ENCODE measurements at regions of chr3 and their contacts with region 1.

Region 1: GRCh38 chr3:16600780-16601539 is 4.3 kb downstream of the DAZL start:
- DNase-seq: peak; percentile 37
- H3K4me3 ChIP-seq: no peak overlapping the region
- H3K27ac ChIP-seq: no peak overlapping the region
- H3K4me1 ChIP-seq: no peaks in the 10 kb centered on the region
- H3K27me3 ChIP-seq: no peaks in the 10 kb centered on the region
- CTCF ChIP-seq: peak; percentile 73 to 76

Region 2: DNA sequence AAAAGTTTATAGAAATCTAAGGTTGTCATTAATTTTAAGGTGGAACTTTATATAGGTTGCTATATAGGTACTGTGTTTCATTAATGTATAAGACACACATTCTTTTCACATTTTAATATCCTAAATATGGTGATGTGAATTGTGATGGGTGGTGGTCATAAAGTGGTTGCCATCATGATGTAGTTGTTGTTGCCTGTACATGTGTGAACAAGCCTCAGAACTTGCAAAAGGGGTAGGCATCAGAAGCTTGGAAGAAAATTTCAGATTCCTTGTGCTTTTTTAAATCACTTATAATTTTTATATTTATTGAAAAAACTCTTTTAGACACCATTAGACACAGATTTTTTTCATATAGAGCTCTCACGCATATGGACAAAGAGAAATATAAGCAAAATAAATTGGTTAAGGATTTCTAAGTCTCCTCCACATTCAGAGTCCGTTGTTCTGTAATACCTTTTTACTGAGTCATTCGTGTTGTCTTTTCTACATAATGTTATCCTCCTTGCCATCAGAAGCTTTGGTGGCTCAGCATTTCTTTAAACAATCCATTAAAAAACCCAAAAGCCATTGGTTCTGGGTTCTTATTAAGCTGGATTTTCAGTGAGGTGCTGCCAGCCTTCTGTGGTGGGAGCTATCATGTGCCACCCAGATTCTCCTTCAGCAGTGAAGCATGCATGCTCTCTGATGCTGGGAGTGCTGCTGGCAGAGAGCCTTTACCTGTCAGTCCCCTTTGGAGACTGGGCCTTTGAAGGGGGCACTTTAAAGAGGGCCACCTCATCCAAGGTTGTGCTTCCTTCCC is 566.9 kb before region 1 on chr3:
- CTCF ChIA-PET with region 1: no interaction called
- dilution Hi-C with region 1: no loop called
- in situ Hi-C with region 1: no loop called
- intact Hi-C with region 1: no loop called
- DNase-seq: peak; percentile 29
- H3K4me3 ChIP-seq: no peak overlapping the region
- H3K27ac ChIP-seq: peak overlapping the region; percentile 10
- H3K4me1 ChIP-seq: peaks cover 15% of the 10 kb centered on the region
- H3K27me3 ChIP-seq: no peaks in the 10 kb centered on the region
- CTCF ChIP-seq: no peak

Region 3: GRCh38 chr3:16290007-16290826 is 310.7 kb before region 1 on chr3:
- CTCF ChIA-PET with region 1: no interaction called
- dilution Hi-C with region 1: no loop called
- in situ Hi-C with region 1: no loop called
- intact Hi-C with region 1: loop called (anchors 5 kb)
- DNase-seq: peak; percentile 28
- H3K4me3 ChIP-seq: no peak overlapping the region
- H3K27ac ChIP-seq: no peak overlapping the region
- H3K4me1 ChIP-seq: peaks cover 4% of the 10 kb centered on the region
- H3K27me3 ChIP-seq: no peaks in the 10 kb centered on the region
- CTCF ChIP-seq: peak; percentile 69 to 77

Region 4: DNA sequence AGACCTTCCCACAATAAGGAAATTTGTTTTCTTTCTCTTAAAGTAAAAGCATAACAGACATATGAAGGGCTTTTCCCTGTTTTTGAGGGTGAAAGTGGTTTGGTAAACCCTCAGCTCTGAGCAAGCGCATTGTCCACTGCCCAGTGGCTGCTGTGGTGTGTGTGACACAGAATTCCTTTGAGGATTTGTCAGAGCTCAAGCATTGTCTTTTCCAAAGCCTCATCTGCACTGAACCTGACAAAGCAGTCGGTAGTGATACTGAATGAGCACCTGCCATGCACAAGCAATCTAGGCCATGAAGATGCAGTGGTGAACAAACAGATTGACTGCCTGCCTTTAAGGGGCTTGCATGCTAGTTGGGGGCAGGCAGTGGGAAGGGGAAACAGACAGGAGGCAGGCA is 412.1 kb after region 1 on chr3:
- CTCF ChIA-PET with region 1: no interaction called
- dilution Hi-C with region 1: no loop called
- in situ Hi-C with region 1: no loop called
- intact Hi-C with region 1: no loop called
- DNase-seq: no peak
- H3K4me3 ChIP-seq: no peak overlapping the region
- H3K27ac ChIP-seq: no peak overlapping the region
- H3K4me1 ChIP-seq: no peaks in the 10 kb centered on the region
- H3K27me3 ChIP-seq: no peaks in the 10 kb centered on the region
- CTCF ChIP-seq: no peak

Region 5: GRCh38 chr3:17032407-17033034 is 431.6 kb after region 1 on chr3:
- CTCF ChIA-PET with region 1: no interaction called
- dilution Hi-C with region 1: no loop called
- in situ Hi-C with region 1: no loop called
- intact Hi-C with region 1: loop called (anchors 1 kb)
- DNase-seq: no peak
- H3K4me3 ChIP-seq: no peak overlapping the region
- H3K27ac ChIP-seq: no peak overlapping the region
- H3K4me1 ChIP-seq: no peaks in the 10 kb centered on the region
- H3K27me3 ChIP-seq: no peaks in the 10 kb centered on the region
- CTCF ChIP-seq: peak; percentile 54 to 67

Region 6: GRCh38 chr3:17233398-17233800 is 632.4 kb after region 1 on chr3:
- CTCF ChIA-PET with region 1: no interaction called
- dilution Hi-C with region 1: loop called (anchors 10 kb)
- in situ Hi-C with region 1: loop called (anchors 10 to 25 kb)
- intact Hi-C with region 1: loop called (anchors 1 kb)
- DNase-seq: peak; percentile 83
- H3K4me3 ChIP-seq: no peak overlapping the region
- H3K27ac ChIP-seq: no peak overlapping the region
- H3K4me1 ChIP-seq: peaks cover 3% of the 10 kb centered on the region
- H3K27me3 ChIP-seq: no peaks in the 10 kb centered on the region
- CTCF ChIP-seq: peak; percentile 65 to 68

Region 7: DNA sequence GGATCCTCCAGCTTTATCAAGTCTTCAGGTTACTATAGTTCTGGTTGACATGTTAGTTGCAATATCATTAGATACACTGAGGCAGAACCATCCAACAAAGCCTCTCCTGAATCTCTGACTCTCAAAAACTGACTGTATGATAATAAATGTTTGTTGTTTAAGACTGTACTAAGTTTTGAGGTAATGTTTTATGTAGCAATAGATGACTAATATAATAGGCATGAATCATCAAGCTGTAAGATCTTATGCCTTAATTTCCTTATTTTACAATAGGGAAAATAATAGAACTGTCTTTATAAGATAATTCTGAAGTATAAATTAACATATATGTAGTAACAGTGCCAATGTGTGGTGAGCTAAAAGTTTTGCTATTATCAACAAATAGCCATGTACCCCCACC is 1230.4 kb after region 1 on chr3:
- CTCF ChIA-PET with region 1: no interaction called
- dilution Hi-C with region 1: no loop called
- in situ Hi-C with region 1: no loop called
- intact Hi-C with region 1: loop called (anchors 10 kb)
- DNase-seq: peak; percentile 53
- H3K4me3 ChIP-seq: no peak overlapping the region
- H3K27ac ChIP-seq: no peak overlapping the region
- H3K4me1 ChIP-seq: peaks cover 24% of the 10 kb centered on the region
- H3K27me3 ChIP-seq: no peaks in the 10 kb centered on the region
- CTCF ChIP-seq: no peak